ENCODE measurements at regions of chr1 and their contacts with region 1.

Region 1: DNA sequence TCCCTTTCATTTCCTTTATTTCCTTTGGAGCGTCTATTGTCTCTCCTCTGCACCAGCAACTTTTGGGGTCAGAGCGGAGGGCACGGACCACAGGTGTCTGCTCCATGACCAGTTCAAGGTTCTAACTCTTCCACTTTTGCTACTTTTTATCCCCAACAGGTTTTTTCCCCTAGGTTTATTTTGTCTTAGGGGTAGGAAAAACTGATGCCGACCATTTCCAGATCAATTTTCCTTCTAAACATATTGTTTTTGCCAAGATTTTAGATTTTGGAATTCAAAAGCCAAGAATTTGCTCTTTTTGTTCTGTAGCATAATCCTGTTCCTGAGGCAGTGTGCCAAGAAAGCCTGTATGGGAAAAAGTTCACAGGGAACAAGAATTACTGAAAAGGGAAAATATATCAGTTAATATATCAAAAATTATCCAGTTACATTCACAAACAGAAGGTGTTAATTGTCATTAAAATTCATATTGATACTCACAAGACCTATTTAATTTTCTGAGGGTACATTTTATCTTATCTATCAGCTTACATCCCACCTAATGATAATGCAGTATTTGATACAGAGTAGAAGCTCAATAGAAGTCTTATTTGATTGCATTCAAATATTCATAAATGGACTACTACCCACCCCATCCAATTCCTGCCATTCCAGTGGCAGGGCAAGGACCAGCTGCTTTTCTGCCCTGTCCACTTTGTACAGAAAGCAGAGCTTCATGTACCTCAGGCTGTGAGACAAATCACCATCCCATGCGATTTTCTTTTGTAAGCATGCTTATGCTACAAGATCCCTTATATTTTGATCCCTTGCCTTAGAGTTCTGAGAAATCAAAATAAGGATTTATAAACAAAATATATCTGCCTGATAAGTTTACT is 31.2 kb downstream of the TSEN15 start:
- DNase-seq: no peak
- H3K4me3 ChIP-seq: no peak overlapping the region
- H3K27ac ChIP-seq: no peak overlapping the region
- H3K4me1 ChIP-seq: no peaks in the 10 kb centered on the region
- H3K27me3 ChIP-seq: no peaks in the 10 kb centered on the region
- CTCF ChIP-seq: no peak
- POLR2A ChIP-seq: no peak

Region 2: GRCh38 chr1:184270556-184270955 is 187.8 kb after region 1 on chr1:
- intact Hi-C with region 1: no loop called
- DNase-seq: no peak
- H3K4me3 ChIP-seq: no peak overlapping the region
- H3K27ac ChIP-seq: no peak overlapping the region
- H3K4me1 ChIP-seq: no peaks in the 10 kb centered on the region
- H3K27me3 ChIP-seq: no peaks in the 10 kb centered on the region
- CTCF ChIP-seq: no peak
- POLR2A ChIP-seq: no peak

Region 3: GRCh38 chr1:184672013-184672726 is 589.4 kb after region 1 on chr1:
- intact Hi-C with region 1: loop called (anchors 10 kb)
- DNase-seq: no peak
- H3K4me3 ChIP-seq: no peak overlapping the region
- H3K27ac ChIP-seq: no peak overlapping the region
- H3K4me1 ChIP-seq: no peaks in the 10 kb centered on the region
- H3K27me3 ChIP-seq: no peaks in the 10 kb centered on the region
- CTCF ChIP-seq: no peak
- POLR2A ChIP-seq: no peak

Measured in adrenal gland (tissue), 19 donors.